ENCODE measurements at regions of chr17 and their contacts with region 1.

Region 1: GRCh38 chr17:8109661-8110464 is 8.5 kb downstream of the ALOXE3 start:
- DNase-seq: no peak
- ATAC-seq: peak; percentile 90
- H3K4me3 ChIP-seq: no peak overlapping the region
- H3K27ac ChIP-seq: no peak overlapping the region
- H3K4me1 ChIP-seq: no peaks in the 10 kb centered on the region
- H3K27me3 ChIP-seq: no peaks in the 10 kb centered on the region
- CTCF ChIP-seq: peak; percentile 91

Region 2: DNA sequence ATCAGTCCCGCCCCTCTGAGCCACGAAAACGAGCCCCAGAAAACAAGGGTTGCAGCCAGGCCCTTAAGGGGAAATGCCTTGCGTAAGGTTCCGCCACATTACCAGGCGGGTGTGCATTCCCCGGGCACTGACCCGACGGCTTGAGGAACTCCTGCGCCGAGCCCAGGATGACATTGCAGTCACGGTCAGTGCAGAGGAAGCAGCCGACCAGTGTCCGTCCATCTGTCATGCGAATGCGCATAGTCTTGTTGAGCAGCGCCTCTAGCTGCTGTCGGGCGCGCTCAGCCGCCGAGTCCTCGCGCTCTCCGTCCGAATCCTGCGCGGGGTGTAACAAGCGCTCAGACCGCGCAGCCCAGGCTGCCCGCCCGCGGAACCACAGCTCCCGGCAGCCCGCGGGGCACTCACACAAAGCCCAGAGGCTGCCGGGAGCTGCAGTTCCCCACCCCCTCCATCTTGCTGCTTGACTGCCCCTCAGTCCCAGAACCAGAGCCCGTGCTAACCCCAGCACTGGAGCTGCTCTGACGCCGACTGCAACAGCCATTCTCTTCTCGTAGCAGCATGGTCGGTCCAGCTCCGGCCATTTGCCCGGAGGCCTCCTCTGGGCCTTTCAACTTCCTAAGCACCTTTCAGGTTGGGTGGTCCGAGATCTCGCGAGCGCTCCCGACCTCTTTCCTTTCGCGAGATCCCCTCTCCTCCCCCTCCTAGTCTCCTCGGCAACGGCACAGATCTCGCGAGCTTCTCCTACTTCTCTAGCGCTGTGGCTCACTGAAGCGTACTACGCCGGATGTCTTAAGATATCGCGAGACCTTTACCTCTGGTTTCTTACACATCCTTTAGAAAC is 252.8 kb before region 1 on chr17 and contains the start of gene NAA38:
- CTCF ChIA-PET with region 1: no interaction called
- POLR2A ChIA-PET with region 1: interaction called, 10 read pairs
- in situ Hi-C with region 1: no loop called
- intact Hi-C with region 1: no loop called
- DNase-seq: no peak
- ATAC-seq: peak; percentile 92
- H3K4me3 ChIP-seq: peak within 1 kb of the TSS; percentile 74 to 79
- H3K27ac ChIP-seq: peak within 1 kb of the TSS; percentile 97
- H3K4me1 ChIP-seq: peaks cover 8% of the 10 kb centered on the region; the same call in 1 of the 2 replicates
- H3K27me3 ChIP-seq: no peaks in the 10 kb centered on the region
- CTCF ChIP-seq: peak; percentile 54
- total RNA-seq, gene NAA38: 75.2 TPM

Region 3: GRCh38 chr17:8019665-8020064 is 90.2 kb before region 1 on chr17:
- CTCF ChIA-PET with region 1: interaction called, 15 read pairs
- POLR2A ChIA-PET with region 1: no interaction called
- in situ Hi-C with region 1: no loop called
- intact Hi-C with region 1: no loop called
- DNase-seq: no peak
- ATAC-seq: no peak
- H3K4me3 ChIP-seq: no peak overlapping the region
- H3K27ac ChIP-seq: no peak overlapping the region
- H3K4me1 ChIP-seq: no peaks in the 10 kb centered on the region
- H3K27me3 ChIP-seq: no peaks in the 10 kb centered on the region
- CTCF ChIP-seq: no peak